PC-3 (cell line): ENCODE measurements at regions of chr2 and their contacts with region 1.

Region 1: DNA sequence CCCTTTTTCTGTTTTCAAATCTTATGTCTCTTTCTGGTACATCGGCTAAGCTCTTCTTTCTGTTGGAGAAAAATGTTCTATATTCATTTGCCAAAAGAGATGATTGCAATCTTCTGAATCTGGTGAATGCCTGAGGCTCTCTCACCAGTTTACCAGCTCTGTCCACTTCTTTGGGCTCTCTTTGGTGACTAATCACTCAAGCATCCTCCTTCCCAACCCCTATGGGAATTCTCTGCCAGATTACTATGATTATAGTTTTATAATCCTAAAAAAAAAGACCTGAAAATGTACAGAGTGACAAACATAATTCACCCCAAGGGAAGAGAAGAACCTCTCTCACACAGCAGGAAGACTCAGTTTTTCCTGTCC is 187.3 kb downstream of the CAMKMT start:
- DNase-seq: peak; percentile 97
- ATAC-seq: peak; percentile 84
- H3K4me3 ChIP-seq: peak overlapping the region; percentile 26; the same call in 1 of the 2 replicates
- H3K27ac ChIP-seq: peak overlapping the region; percentile 89
- H3K4me1 ChIP-seq: peaks cover 54% of the 10 kb centered on the region
- H3K27me3 ChIP-seq: no peaks in the 10 kb centered on the region
- CTCF ChIP-seq: no peak

Region 2: DNA sequence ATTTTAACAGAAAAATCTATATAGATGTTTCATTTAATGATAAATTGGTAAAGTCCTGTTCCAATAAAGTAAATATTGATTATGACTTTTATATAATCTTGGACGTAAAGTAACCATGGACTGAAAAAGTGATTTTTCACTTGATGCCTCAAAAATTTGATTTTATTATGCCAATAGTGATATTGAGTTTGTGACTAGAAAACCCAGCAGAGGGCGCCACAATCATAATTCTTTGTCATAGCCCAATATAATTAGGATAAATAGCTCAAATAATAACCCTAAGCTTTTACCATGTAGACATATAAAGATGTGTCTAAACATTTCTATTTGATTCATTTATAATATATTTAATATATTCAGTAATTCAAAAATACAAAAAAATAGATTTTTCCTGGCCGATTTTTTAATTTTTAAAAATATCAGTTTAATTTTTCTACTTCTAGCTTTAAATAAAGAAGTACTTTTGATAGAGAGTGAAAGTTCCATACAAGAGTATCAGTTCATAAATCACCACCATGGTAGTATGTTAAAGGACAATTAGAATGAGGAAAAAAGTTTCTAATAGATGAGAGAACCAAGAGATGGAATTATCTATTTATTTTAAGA is 156.6 kb before region 1 on chr2:
- CTCF ChIA-PET with region 1: no interaction called
- POLR2A ChIA-PET with region 1: no interaction called
- intact Hi-C with region 1: loop called (anchors 10 kb)
- DNase-seq: peak; percentile 73
- ATAC-seq: no peak
- H3K4me3 ChIP-seq: no peak overlapping the region
- H3K27ac ChIP-seq: no peak overlapping the region
- H3K4me1 ChIP-seq: no peaks in the 10 kb centered on the region
- H3K27me3 ChIP-seq: no peaks in the 10 kb centered on the region
- CTCF ChIP-seq: peak; percentile 72

Region 3: DNA sequence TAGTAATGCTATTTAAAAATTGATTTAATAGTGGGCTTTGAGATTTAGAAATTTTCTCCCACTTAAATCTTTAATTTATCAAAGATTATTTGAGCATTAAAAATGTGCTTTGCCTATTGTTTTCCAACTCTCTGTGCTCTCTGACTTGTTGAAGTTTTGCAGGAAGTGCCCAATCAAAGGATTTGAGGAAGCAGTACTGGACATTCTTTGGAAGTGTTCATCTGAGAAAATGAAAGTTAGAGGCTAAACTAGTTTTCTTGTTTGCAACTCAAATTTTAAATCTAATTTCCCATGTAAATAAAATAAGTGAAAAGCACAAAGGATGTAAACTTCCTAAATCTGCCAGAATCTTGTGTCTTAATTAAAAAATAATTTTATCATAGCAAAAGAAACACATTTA is 98.3 kb before region 1 on chr2:
- CTCF ChIA-PET with region 1: no interaction called
- POLR2A ChIA-PET with region 1: no interaction called
- intact Hi-C with region 1: no loop called
- DNase-seq: no peak
- ATAC-seq: no peak
- H3K4me3 ChIP-seq: no peak overlapping the region
- H3K27ac ChIP-seq: no peak overlapping the region
- H3K4me1 ChIP-seq: no peaks in the 10 kb centered on the region
- H3K27me3 ChIP-seq: no peaks in the 10 kb centered on the region
- CTCF ChIP-seq: no peak

Region 4: GRCh38 chr2:44572196-44572900 is 23.3 kb after region 1 on chr2:
- CTCF ChIA-PET with region 1: no interaction called
- POLR2A ChIA-PET with region 1: no interaction called
- intact Hi-C with region 1: loop called (anchors 2 kb)
- DNase-seq: peak; percentile 81
- ATAC-seq: peak; percentile 91
- H3K4me3 ChIP-seq: no peak overlapping the region
- H3K27ac ChIP-seq: peak overlapping the region; percentile 45
- H3K4me1 ChIP-seq: peaks cover 31% of the 10 kb centered on the region
- H3K27me3 ChIP-seq: no peaks in the 10 kb centered on the region
- CTCF ChIP-seq: no peak

Region 5: GRCh38 chr2:44652701-44653100 is 103.6 kb after region 1 on chr2:
- CTCF ChIA-PET with region 1: no interaction called
- POLR2A ChIA-PET with region 1: no interaction called
- intact Hi-C with region 1: no loop called
- DNase-seq: no peak
- ATAC-seq: no peak
- H3K4me3 ChIP-seq: no peak overlapping the region
- H3K27ac ChIP-seq: no peak overlapping the region
- H3K4me1 ChIP-seq: no peaks in the 10 kb centered on the region
- H3K27me3 ChIP-seq: no peaks in the 10 kb centered on the region
- CTCF ChIP-seq: no peak